ENCODE measurements at regions of chr20 and their contacts with region 1.

Region 1: DNA sequence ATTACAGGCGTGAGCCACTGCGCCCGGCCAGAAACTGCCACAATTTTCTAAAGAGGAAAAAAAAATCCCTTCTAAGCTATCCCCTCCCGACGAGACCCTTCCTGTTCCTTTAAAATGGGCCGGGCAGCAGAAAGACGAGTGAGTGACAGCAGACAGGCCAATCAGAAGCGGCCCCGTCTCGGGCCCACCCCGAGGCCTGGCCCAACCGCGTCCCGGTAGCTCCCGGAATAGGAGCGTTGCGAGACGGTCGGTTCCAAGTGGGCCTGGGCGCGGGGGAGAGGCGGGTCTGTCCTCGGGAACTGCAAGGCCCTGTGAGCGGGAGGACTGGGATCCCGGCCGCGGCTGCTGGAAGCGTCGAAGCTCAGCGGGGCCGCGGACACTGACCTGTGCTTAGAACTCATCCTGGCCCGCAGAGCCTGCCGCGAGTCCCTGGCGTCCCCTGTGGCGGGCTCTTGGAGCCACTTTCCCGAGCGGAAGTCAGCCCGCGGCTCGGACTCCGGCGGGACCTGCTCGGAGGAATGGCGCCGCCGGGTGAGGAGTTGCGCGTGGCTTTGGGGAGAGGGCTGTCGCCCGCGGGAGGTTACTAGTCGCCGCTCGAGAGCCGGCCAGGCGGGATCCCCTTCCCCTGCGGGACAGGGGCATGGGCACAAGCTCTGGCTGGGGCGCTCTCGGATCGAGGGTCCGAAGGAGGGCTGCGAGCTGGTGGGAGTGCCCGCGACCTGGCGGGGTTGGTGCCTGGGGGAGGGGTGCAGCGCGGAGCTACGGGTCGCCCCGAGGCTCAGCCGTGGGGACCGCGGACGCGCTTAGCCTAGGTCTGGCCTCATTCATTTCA is at the starts of genes MROH8 and RPN2:
- DNase-seq: peak; percentile 98
- H3K4me3 Mint-ChIP-seq: peak within 1 kb of the TSS; percentile 97
- H3K27ac Mint-ChIP-seq: peak within 1 kb of the TSS; percentile 98
- H3K4me1 Mint-ChIP-seq: peaks cover 25% of the 10 kb centered on the region
- H3K27me3 Mint-ChIP-seq: no peaks in the 10 kb centered on the region
- CTCF ChIP-seq: no peak
- total RNA-seq, gene MROH8: 1.1 and 1.5 TPM in 2 replicates
- total RNA-seq, gene RPN2: 226 and 259 TPM in 2 replicates

Region 2: GRCh38 chr20:37007898-37008649 is 171.0 kb before region 1 on chr20:
- CTCF ChIA-PET with region 1: interaction called, 4 read pairs
- POLR2A ChIA-PET with region 1: no interaction called
- intact Hi-C with region 1: loop called (anchors 1 kb)
- DNase-seq: peak; percentile 16
- H3K4me3 Mint-ChIP-seq: no peak overlapping the region
- H3K27ac Mint-ChIP-seq: no peak overlapping the region
- H3K4me1 Mint-ChIP-seq: no peaks in the 10 kb centered on the region
- H3K27me3 Mint-ChIP-seq: no peaks in the 10 kb centered on the region
- CTCF ChIP-seq: peak; percentile 23

Region 3: DNA sequence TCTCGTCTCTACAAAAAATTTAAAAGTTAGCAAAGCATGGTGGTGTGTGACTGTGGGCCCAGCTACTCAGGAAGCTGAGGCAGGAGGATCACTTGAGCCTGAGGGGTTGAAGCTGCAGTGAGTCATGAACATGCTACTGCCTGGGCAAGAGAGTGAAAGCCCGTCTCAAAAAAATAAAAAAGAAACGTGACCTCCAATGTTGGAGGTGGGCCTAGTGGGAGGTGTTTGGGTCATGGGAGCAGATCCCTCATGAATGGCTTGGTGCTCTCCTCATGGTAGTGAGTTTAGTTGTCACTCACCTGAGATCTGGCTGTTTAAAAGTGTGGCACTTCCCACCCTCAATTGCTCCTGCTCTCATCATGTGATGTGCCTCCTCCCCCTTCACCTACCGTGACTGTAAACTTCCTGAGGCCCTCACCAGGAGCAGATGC is 107.6 kb before region 1 on chr20:
- CTCF ChIA-PET with region 1: no interaction called
- POLR2A ChIA-PET with region 1: interaction called, 7 read pairs
- intact Hi-C with region 1: loop called (anchors 2 kb)
- DNase-seq: peak; percentile 88
- H3K4me3 Mint-ChIP-seq: peak overlapping the region; percentile 40
- H3K27ac Mint-ChIP-seq: peak overlapping the region; percentile 92
- H3K4me1 Mint-ChIP-seq: peaks cover 16% of the 10 kb centered on the region
- H3K27me3 Mint-ChIP-seq: no peaks in the 10 kb centered on the region
- CTCF ChIP-seq: no peak

Region 4: GRCh38 chr20:37095599-37096414 is 83.2 kb before region 1 on chr20 and contains the start of gene RBL1:
- CTCF ChIA-PET with region 1: interaction called, 13 read pairs
- POLR2A ChIA-PET with region 1: interaction called, 33 read pairs
- intact Hi-C with region 1: loop called (anchors 10 kb)
- DNase-seq: peak; percentile 83
- H3K4me3 Mint-ChIP-seq: peak within 1 kb of the TSS; percentile 89
- H3K27ac Mint-ChIP-seq: peak within 1 kb of the TSS; percentile 87
- H3K4me1 Mint-ChIP-seq: peaks cover 16% of the 10 kb centered on the region
- H3K27me3 Mint-ChIP-seq: no peaks in the 10 kb centered on the region
- CTCF ChIP-seq: no peak
- total RNA-seq, gene RBL1: 8.8 and 9.2 TPM in 2 replicates

Region 5: DNA sequence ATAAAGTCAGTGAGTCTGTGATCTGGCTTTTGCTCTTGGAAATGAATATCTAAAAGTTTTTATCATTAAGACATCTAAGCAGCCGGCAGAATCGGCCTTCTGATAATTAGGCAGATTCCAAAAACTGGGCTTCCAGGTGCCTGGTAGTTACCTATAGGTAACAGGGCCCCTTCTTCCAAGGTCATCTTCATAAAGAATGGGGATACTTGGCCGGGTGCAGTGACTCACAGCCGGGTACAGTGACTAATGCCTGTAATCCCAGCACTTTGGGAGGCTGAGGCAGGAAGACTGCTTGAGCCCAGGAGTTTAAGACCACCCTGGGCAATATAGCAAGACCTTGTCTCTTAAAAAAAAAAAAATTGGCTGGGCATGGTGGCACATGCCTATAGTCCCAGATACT is 70.4 kb before region 1 on chr20:
- CTCF ChIA-PET with region 1: interaction called, 5 read pairs
- POLR2A ChIA-PET with region 1: interaction called, 7 read pairs
- intact Hi-C with region 1: loop called (anchors 10 kb)
- DNase-seq: peak; percentile 25
- H3K4me3 Mint-ChIP-seq: no peak overlapping the region
- H3K27ac Mint-ChIP-seq: no peak overlapping the region
- H3K4me1 Mint-ChIP-seq: peaks cover 2% of the 10 kb centered on the region
- H3K27me3 Mint-ChIP-seq: no peaks in the 10 kb centered on the region
- CTCF ChIP-seq: no peak

Region 6: DNA sequence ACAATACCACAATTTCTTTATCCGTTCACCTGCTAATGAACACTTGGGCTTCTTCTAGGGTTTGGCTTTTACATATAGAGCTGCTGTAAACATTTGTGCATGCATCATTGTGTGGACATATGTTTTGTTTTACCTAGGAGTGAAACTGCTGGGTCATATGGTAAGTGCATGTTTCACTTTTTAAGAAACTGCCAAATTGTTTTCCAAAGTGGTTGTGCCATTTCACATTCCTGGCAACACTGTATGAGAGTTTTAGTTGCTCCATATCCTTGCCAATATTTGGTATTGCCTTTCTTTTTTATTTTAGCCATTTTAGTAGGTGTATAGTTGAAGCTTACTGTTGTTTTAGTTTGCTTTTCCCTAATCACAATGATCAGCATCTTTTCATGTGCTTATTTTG is 14.0 kb before region 1 on chr20:
- CTCF ChIA-PET with region 1: interaction called, 19 read pairs
- POLR2A ChIA-PET with region 1: interaction called, 21 read pairs
- intact Hi-C with region 1: no loop called
- DNase-seq: no peak
- H3K4me3 Mint-ChIP-seq: no peak overlapping the region
- H3K27ac Mint-ChIP-seq: no peak overlapping the region
- H3K4me1 Mint-ChIP-seq: peaks cover 5% of the 10 kb centered on the region
- H3K27me3 Mint-ChIP-seq: peaks cover 56% of the 10 kb centered on the region
- CTCF ChIP-seq: no peak

Region 7: DNA sequence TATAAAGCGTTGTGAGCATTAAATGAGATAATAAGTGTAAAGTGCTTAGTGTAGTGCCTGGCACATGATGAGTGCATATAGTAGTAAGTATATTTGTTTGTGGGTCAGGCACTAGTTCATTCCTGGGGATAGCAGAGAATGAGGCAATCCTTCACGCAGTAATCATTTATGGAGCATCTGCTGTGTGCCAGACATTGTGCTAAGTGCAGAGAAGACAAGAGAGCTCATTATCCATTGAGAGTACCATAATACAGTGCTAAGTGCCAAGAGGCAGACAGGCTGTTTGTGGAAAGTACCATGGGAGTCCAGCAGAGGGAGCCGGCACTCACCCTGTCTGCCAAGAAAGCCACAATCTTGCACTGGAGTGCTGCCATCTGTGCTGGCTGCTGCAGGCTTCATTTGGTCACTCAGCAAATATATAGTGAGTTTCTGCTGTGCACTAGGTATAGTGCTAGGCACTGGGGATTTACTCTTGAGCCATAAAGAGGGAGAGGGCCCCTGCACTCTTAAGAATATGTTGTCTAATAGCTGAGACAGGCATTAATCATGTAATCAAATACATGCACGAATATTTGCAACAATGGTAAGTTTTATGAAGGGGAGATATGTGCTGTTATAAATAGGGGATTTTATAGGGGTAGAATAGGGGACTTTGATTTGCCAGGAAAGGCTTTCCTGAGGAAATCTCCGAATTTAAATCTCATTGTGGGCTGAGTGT is 13.2 kb after region 1 on chr20:
- CTCF ChIA-PET with region 1: interaction called, 68 read pairs
- POLR2A ChIA-PET with region 1: interaction called, 36 read pairs
- intact Hi-C with region 1: no loop called
- DNase-seq: peak; percentile 82
- H3K4me3 Mint-ChIP-seq: no peak overlapping the region
- H3K27ac Mint-ChIP-seq: no peak overlapping the region
- H3K4me1 Mint-ChIP-seq: peaks cover 35% of the 10 kb centered on the region
- H3K27me3 Mint-ChIP-seq: no peaks in the 10 kb centered on the region
- CTCF ChIP-seq: peak; percentile 80

Region 8: DNA sequence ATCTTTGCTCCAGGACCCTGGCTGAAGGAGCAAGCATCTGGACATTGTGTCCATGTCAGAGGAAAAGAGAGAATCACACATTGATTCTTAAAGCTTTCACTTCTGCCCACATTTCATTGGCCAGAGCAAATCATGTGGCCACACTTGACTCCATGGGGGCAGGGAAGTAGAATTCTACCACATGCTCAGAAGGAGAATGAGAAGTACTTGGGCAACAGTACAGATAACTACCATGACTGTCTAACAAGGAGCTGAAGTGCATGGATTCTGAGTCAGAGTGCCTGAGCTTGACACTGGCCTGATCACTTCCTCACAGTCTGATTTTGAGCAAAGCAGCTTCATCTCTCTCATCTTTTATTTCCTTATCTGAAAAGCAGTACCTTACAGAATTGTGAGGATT is 44.0 kb after region 1 on chr20:
- CTCF ChIA-PET with region 1: no interaction called
- POLR2A ChIA-PET with region 1: no interaction called
- intact Hi-C with region 1: no loop called
- DNase-seq: peak; percentile 46
- H3K4me3 Mint-ChIP-seq: no peak overlapping the region
- H3K27ac Mint-ChIP-seq: no peak overlapping the region
- H3K4me1 Mint-ChIP-seq: no peaks in the 10 kb centered on the region
- H3K27me3 Mint-ChIP-seq: no peaks in the 10 kb centered on the region
- CTCF ChIP-seq: no peak

Region 9: GRCh38 chr20:37372441-37372840 is 193.4 kb after region 1 on chr20:
- CTCF ChIA-PET with region 1: no interaction called
- POLR2A ChIA-PET with region 1: no interaction called
- intact Hi-C with region 1: no loop called
- DNase-seq: no peak
- H3K4me3 Mint-ChIP-seq: no peak overlapping the region
- H3K27ac Mint-ChIP-seq: no peak overlapping the region
- H3K4me1 Mint-ChIP-seq: no peaks in the 10 kb centered on the region
- H3K27me3 Mint-ChIP-seq: no peaks in the 10 kb centered on the region
- CTCF ChIP-seq: no peak

Measured in MCF 10A (cell line).